ENCODE measurements at regions of chr13 and their contacts with region 1.

Region 1: DNA sequence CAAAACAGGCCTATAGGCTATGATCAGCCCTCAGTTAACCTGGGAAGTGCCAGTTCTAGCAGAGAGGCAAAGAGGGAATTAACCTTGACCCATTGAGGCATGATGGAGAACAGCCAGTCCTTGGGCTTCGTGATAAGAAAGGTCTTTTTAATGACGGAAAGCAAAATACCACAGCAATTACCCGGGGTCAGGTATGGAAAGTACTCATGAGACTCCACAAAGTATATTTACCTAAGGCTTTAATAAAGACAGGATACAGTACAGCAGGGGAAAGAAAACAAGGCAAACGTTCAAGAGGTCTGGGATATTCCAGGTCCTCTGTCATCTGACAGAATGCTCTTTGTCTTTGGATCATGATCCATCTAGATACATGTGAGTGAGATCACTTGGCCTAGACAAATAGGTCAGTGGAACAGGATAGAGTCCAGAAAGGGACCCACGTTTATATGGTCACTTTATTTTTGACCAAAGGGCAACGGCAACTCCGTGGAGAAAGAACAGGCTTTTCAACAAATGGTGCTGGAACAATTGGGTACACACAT is 52.2 kb downstream of the WDFY2 start:
- DNase-seq: no peak
- ATAC-seq: no peak
- H3K4me3 ChIP-seq: no peak overlapping the region
- H3K4me3 Mint-ChIP-seq: no peak overlapping the region
- H3K27ac ChIP-seq: no peak overlapping the region
- H3K27ac Mint-ChIP-seq: no peak overlapping the region
- H3K4me1 ChIP-seq: peaks cover 8% of the 10 kb centered on the region
- H3K4me1 Mint-ChIP-seq: peaks cover 46% of the 10 kb centered on the region
- H3K27me3 ChIP-seq: no peaks in the 10 kb centered on the region
- H3K27me3 Mint-ChIP-seq: no peaks in the 10 kb centered on the region
- CTCF ChIP-seq: no peak

Region 2: DNA sequence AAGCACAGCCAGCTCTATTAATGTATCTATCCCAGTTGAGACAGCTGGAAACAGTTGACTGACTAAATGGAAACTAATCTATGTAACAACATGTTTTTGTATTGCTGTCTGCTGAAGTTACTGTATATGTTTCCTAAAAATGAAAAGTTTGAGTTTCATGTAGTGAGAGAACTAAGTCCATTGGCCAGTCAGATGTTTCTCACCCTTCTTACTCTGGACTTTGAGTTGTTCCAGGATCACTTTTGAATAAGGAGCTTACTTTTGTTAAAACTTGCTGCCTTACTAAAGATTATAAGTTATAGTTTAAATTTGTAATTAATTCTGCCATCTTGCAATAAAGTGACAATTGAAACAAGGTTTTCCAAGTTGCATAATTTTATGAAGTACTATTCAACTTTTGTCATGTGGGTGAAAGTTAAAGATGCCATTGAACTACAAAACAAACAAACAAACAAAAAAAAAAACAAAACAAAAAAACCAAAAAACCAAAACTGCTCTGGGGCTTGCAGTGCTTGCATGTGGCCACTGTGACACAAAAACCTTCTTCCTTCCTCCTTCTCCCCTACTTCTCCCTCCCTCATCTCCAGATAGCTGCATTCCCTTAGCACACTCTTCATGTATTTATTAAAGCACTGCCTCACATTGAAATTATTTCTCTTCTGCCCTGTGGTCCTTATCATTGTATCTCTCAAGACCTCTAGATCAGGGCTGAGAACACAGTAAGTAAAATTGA is 36.8 kb before region 1 on chr13:
- CTCF ChIA-PET with region 1: no interaction called
- POLR2A ChIA-PET with region 1: no interaction called
- intact Hi-C with region 1: loop called in 1 of 2 experiments (anchors 5 kb)
- DNase-seq: no peak
- ATAC-seq: no peak
- H3K4me3 ChIP-seq: no peak overlapping the region
- H3K4me3 Mint-ChIP-seq: no peak overlapping the region
- H3K27ac ChIP-seq: no peak overlapping the region
- H3K27ac Mint-ChIP-seq: no peak overlapping the region
- H3K4me1 ChIP-seq: peaks cover 6% of the 10 kb centered on the region
- H3K4me1 Mint-ChIP-seq: peaks cover 38% of the 10 kb centered on the region
- H3K27me3 ChIP-seq: no peaks in the 10 kb centered on the region
- H3K27me3 Mint-ChIP-seq: no peaks in the 10 kb centered on the region
- CTCF ChIP-seq: no peak

Region 3: GRCh38 chr13:51625555-51626345 is 10.7 kb before region 1 on chr13:
- CTCF ChIA-PET with region 1: no interaction called
- POLR2A ChIA-PET with region 1: no interaction called
- intact Hi-C with region 1: loop called in 1 of 2 experiments (anchors 2 kb)
- DNase-seq: no peak
- ATAC-seq: no peak
- H3K4me3 ChIP-seq: no peak overlapping the region
- H3K4me3 Mint-ChIP-seq: no peak overlapping the region
- H3K27ac ChIP-seq: no peak overlapping the region
- H3K27ac Mint-ChIP-seq: peak overlapping the region; percentile 39
- H3K4me1 ChIP-seq: peaks cover 9% of the 10 kb centered on the region
- H3K4me1 Mint-ChIP-seq: peaks cover 42% of the 10 kb centered on the region
- H3K27me3 ChIP-seq: no peaks in the 10 kb centered on the region
- H3K27me3 Mint-ChIP-seq: no peaks in the 10 kb centered on the region
- CTCF ChIP-seq: no peak

Region 4: GRCh38 chr13:51668580-51669195 is 32.3 kb after region 1 on chr13:
- CTCF ChIA-PET with region 1: no interaction called
- POLR2A ChIA-PET with region 1: no interaction called
- intact Hi-C with region 1: no loop called
- DNase-seq: no peak
- ATAC-seq: no peak
- H3K4me3 ChIP-seq: no peak overlapping the region
- H3K4me3 Mint-ChIP-seq: no peak overlapping the region
- H3K27ac ChIP-seq: no peak overlapping the region
- H3K27ac Mint-ChIP-seq: no peak overlapping the region
- H3K4me1 ChIP-seq: peaks cover 10% of the 10 kb centered on the region
- H3K4me1 Mint-ChIP-seq: peaks cover 42% of the 10 kb centered on the region
- H3K27me3 ChIP-seq: no peaks in the 10 kb centered on the region
- H3K27me3 Mint-ChIP-seq: no peaks in the 10 kb centered on the region
- CTCF ChIP-seq: no peak

Region 5: GRCh38 chr13:51681037-51681678 is 44.7 kb after region 1 on chr13:
- CTCF ChIA-PET with region 1: no interaction called
- POLR2A ChIA-PET with region 1: no interaction called
- intact Hi-C with region 1: no loop called
- DNase-seq: no peak
- ATAC-seq: no peak
- H3K4me3 ChIP-seq: no peak overlapping the region
- H3K4me3 Mint-ChIP-seq: no peak overlapping the region
- H3K27ac ChIP-seq: no peak overlapping the region
- H3K27ac Mint-ChIP-seq: no peak overlapping the region
- H3K4me1 ChIP-seq: no peaks in the 10 kb centered on the region
- H3K4me1 Mint-ChIP-seq: peaks cover 3% of the 10 kb centered on the region
- H3K27me3 ChIP-seq: no peaks in the 10 kb centered on the region
- H3K27me3 Mint-ChIP-seq: no peaks in the 10 kb centered on the region
- CTCF ChIP-seq: no peak

Region 6: DNA sequence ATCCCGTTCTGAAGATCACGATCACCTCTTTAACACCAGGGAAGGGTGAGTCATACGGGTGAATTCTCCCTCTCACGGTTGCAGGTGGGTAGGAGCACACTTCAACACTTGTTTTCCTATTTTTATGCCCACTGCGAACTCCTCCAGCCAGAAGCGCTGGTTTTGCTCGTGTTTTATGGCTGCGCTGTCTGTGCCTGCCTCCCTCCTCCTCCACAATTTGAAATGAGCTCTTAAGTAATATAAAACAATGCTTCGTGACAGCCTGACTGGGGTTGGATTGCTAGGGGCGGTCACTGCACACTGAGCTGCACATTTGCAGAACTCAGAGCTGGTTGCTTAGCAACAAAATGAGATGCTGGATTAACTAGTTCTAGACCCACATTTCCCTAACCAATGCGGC is 238.2 kb after region 1 on chr13:
- CTCF ChIA-PET with region 1: no interaction called
- POLR2A ChIA-PET with region 1: no interaction called
- intact Hi-C with region 1: loop called in 1 of 2 experiments (anchors 5 kb)
- DNase-seq: no peak
- ATAC-seq: no peak
- H3K4me3 ChIP-seq: no peak overlapping the region
- H3K4me3 Mint-ChIP-seq: no peak overlapping the region
- H3K27ac ChIP-seq: no peak overlapping the region
- H3K27ac Mint-ChIP-seq: no peak overlapping the region
- H3K4me1 ChIP-seq: no peaks in the 10 kb centered on the region
- H3K4me1 Mint-ChIP-seq: no peaks in the 10 kb centered on the region
- H3K27me3 ChIP-seq: no peaks in the 10 kb centered on the region
- H3K27me3 Mint-ChIP-seq: no peaks in the 10 kb centered on the region
- CTCF ChIP-seq: no peak